ENCODE measurements at regions of chr22 and their contacts with region 1.

Region 1: DNA sequence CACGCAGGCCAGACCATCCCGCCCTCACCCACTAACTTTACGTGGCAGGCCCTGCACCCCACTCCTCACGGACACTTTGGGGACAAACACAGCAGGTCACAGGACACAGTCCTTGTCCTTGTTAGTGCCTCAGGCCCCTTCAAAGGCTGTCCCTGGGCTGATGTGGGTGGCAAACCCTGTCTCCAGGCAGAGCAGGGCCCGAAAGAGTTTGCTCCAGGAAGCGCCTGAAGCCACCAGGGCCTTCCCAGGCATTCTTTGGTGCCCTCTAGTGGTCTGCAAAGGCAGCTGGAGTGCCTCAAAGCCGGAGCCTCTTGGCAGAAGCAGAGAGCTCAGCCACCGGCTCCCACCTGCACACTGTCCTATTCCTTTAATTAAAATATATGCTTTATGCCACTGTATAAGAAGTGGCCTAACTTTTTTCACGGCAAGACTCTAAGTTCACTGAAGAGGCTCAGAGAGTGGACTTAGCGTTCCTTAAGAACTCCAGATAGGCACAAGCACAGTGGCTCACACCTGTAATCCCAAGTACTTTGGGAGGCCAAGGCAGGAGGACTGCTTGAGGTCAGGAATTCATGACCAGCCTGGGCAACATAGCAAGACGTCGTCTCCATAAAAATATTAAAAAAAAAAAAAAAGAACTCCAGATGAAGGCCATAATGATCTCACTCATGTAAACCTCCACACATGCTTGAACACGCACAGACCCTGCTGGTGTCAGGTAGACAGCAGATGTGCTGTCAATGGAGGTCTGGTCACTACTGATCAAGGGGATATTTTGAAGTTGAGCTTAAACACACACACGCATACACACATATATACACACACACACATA is 11.1 kb downstream of the TXN2 start:
- DNase-seq: peak; percentile 65 to 83
- H3K4me3 ChIP-seq: no peak overlapping the region
- H3K27ac ChIP-seq: peak overlapping the region; percentile 30; the same call in 1 of the 2 replicates
- H3K4me1 ChIP-seq: peaks cover 0 to 2% (median 0%) of the 10 kb centered on the region in 4 experiments; a peak in 2 of 7 replicates
- H3K27me3 ChIP-seq: no peaks in the 10 kb centered on the region
- CTCF ChIP-seq: peak; percentile 85 to 96 (median 95)
- EP300 ChIP-seq: no peak
- POLR2A ChIP-seq: 0 out of 3 replicates have a peak, but pooled peaks of 1 of the 2 experiments have one; percentile 28
- RAD21 ChIP-seq: peak; percentile 98 to 99

Region 2: DNA sequence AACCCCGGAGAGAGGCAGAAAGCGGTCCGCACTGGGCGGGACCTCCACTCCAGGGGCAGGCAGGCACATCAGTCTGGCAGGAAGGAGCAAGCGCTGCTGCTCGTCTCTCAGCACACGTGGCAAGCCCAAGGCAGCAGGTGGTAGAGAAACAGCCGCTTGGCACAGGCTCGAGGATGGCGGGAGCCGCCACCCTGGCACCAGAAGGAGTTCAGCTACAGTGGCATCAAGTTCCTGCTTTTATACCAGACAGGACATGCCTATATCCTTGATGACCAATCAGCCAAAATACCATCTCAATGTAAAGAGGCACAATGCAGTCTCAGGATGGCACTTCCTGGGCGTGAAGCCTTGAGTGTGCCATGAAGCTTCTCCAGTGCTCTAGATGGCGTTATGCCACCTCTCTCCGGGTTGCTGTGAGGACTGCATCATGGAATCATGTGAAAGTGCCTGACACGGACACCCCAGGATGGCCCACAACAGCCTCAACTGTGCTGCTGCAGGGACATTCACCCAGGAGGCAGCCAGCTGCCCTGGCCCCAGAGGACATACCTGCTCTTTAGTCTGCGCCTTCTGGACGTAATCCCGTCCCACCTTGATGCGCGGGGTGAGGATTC is 152.6 kb before region 1 on chr22:
- CTCF ChIA-PET with region 1: interaction called, 25 read pairs
- POLR2A ChIA-PET with region 1: interaction called, 3 read pairs
- DNase-seq: no peak
- H3K4me3 ChIP-seq: no peak overlapping the region
- H3K27ac ChIP-seq: no peak overlapping the region
- H3K4me1 ChIP-seq: no peaks in the 10 kb centered on the region
- H3K27me3 ChIP-seq: no peaks in the 10 kb centered on the region
- CTCF ChIP-seq: no peak
- EP300 ChIP-seq: no peak
- POLR2A ChIP-seq: no peak
- RAD21 ChIP-seq: no peak

Region 3: DNA sequence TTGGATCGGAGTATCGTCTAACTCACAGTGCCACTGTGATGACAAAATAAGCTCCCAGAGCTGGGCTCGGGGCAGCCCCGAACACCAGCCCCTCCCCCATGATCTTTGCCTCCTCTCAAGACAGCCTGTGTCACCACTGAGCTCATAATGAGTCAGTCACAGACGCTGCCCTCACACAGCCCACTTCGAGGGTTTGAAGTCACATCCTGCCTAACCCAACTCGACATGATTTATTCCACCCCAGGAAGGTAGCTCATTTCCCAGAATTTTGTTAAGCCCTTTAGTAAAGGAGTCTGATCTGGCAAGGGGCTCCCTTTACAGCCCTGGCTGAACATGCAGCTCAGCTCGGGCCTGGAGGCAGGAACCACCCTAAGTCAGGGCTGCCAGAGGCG is 105.4 kb before region 1 on chr22:
- CTCF ChIA-PET with region 1: interaction called, 18 read pairs
- POLR2A ChIA-PET with region 1: interaction called, 4 read pairs
- DNase-seq: no peak
- H3K4me3 ChIP-seq: no peak overlapping the region
- H3K27ac ChIP-seq: 0 out of 2 replicates have a peak overlapping the region, but pooled peaks have one; percentile 21
- H3K4me1 ChIP-seq: peaks cover 48 to 71% (median 61%) of the 10 kb centered on the region in 4 experiments
- H3K27me3 ChIP-seq: no peaks in the 10 kb centered on the region
- CTCF ChIP-seq: no peak
- EP300 ChIP-seq: no peak
- POLR2A ChIP-seq: no peak
- RAD21 ChIP-seq: no peak

Region 4: DNA sequence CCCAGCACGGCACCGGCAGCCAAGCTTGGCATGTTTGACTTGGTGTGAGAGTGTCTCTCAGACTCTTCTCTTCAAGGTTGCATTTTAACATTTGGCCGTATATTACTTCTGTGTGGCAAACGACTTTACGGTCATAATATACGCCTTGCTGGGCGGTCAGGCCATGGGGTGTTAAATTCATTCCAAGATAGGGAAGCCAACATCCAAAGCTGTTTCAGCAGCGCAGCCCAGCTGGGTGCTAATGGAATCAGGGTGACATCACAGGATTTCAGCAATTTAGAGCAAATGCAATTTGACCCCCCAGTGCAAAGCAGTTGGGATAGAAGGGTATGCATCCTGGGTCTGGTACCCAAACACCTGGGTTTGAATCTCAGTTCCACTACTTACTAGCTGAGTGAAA is 65.9 kb before region 1 on chr22:
- CTCF ChIA-PET with region 1: no interaction called
- POLR2A ChIA-PET with region 1: no interaction called
- DNase-seq: no peak
- H3K4me3 ChIP-seq: no peak overlapping the region
- H3K27ac ChIP-seq: no peak overlapping the region
- H3K4me1 ChIP-seq: peaks cover 0 to 4% (median 1%) of the 10 kb centered on the region in 4 experiments; a peak in 1 of 7 replicates
- H3K27me3 ChIP-seq: no peaks in the 10 kb centered on the region
- CTCF ChIP-seq: no peak
- EP300 ChIP-seq: no peak
- POLR2A ChIP-seq: no peak
- RAD21 ChIP-seq: no peak

Region 5: GRCh38 chr22:36454916-36455570 is 15.3 kb before region 1 on chr22:
- CTCF ChIA-PET with region 1: interaction called, 25 read pairs
- POLR2A ChIA-PET with region 1: interaction called, 7 read pairs
- DNase-seq: peak; percentile 91 to 98
- H3K4me3 ChIP-seq: peak overlapping the region; percentile 47 to 67 (median 60)
- H3K27ac ChIP-seq: peak overlapping the region; percentile 84; the same call in 1 of the 2 replicates
- H3K4me1 ChIP-seq: peaks cover 7 to 25% (median 12%) of the 10 kb centered on the region in 4 experiments
- H3K27me3 ChIP-seq: no peaks in the 10 kb centered on the region
- CTCF ChIP-seq: peak in 2 of 3 experiments; percentile 9 to 26; a peak in 2 of 4 replicates
- EP300 ChIP-seq: peak in 1 of 2 experiments; percentile 69; a peak in 1 of 3 replicates
- POLR2A ChIP-seq: peak in 1 of 2 experiments; percentile 73; a peak in 2 of 3 replicates
- RAD21 ChIP-seq: peak; percentile 26 to 38; a peak in 3 of 4 replicates

Region 6: GRCh38 chr22:36587289-36588154 is 117.1 kb after region 1 on chr22:
- CTCF ChIA-PET with region 1: no interaction called
- POLR2A ChIA-PET with region 1: no interaction called
- DNase-seq: no peak
- H3K4me3 ChIP-seq: no peak overlapping the region
- H3K27ac ChIP-seq: no peak overlapping the region
- H3K4me1 ChIP-seq: peaks cover 0 to 6% (median 2%) of the 10 kb centered on the region in 4 experiments; a peak in 4 of 7 replicates
- H3K27me3 ChIP-seq: no peaks in the 10 kb centered on the region; a peak in 1 of 7 replicates
- CTCF ChIP-seq: no peak
- EP300 ChIP-seq: no peak
- POLR2A ChIP-seq: no peak
- RAD21 ChIP-seq: no peak

Measured in H1 (cell line).